ENCODE measurements at regions of chr3 and their contacts with region 1.

Region 1: GRCh38 chr3:195106418-195106906 is 164.5 kb downstream of the XXYLT1 start:
- DNase-seq: peak; percentile 85
- ATAC-seq: peak; percentile 98
- H3K4me3 ChIP-seq: peak overlapping the region in 3 of 5 experiments; percentile 13 to 40 (median 21)
- H3K4me3 Mint-ChIP-seq: peak overlapping the region; percentile 80
- H3K27ac ChIP-seq: no peak overlapping the region
- H3K27ac Mint-ChIP-seq: peak overlapping the region; percentile 79
- H3K4me1 ChIP-seq: peaks cover 15 to 24% of the 10 kb centered on the region in 2 donors
- H3K4me1 Mint-ChIP-seq: peaks cover 34% of the 10 kb centered on the region
- H3K27me3 ChIP-seq: no peaks in the 10 kb centered on the region
- H3K27me3 Mint-ChIP-seq: no peaks in the 10 kb centered on the region
- CTCF ChIP-seq: peak; percentile 97

Region 2: GRCh38 chr3:194769020-194769643 is 337.3 kb before region 1 on chr3:
- CTCF ChIA-PET with region 1: interaction called, 4 read pairs
- POLR2A ChIA-PET with region 1: no interaction called
- intact Hi-C with region 1: loop called (anchors 1 kb)
- DNase-seq: peak; percentile 97
- ATAC-seq: peak; percentile 97
- H3K4me3 ChIP-seq: peak overlapping the region; percentile 40 to 75 (median 55)
- H3K4me3 Mint-ChIP-seq: peak overlapping the region; percentile 85
- H3K27ac ChIP-seq: peak overlapping the region; percentile 52 to 77
- H3K27ac Mint-ChIP-seq: peak overlapping the region; percentile 83
- H3K4me1 ChIP-seq: peaks cover 19 to 29% of the 10 kb centered on the region in 2 donors
- H3K4me1 Mint-ChIP-seq: peaks cover 29% of the 10 kb centered on the region
- H3K27me3 ChIP-seq: peaks cover 0 to 2% (median 0%) of the 10 kb centered on the region in 4 experiments
- H3K27me3 Mint-ChIP-seq: peaks cover 14% of the 10 kb centered on the region
- CTCF ChIP-seq: no peak

Region 3: DNA sequence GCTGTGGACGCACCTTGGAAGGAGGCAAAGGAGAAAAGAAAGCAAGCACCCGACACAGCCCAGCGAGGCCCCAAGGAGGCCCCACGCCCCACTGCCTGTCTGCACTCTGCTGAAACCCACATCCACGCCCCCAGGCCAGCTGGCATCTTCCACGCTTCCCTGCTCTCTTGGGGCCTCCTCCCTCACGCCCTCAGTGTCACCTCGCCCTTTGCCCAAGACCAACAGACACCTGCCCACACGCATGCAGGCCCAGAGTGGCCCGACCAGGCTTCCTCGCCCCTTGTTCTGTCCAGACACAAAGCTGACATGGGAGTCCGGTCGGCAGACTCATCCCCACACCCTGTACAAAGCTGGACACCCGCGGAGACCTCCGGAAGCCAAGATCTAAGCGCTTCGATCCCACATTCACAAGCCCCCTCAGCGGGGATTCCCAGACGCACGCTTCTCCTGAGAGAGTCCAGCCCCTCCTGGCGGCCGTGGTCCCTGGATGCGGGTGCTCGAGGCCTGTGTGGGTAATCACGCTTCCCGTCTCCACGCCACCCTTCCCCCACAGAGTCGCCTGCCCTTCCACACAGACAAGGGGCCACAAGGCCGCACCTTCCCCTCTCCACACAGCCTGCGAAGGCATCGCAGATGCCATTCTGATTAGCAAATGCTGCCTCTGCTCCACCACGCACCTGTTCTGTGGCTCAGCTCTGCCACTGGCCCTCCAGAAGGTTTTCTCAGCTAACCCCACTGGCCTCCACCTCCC is 12.1 kb before region 1 on chr3:
- CTCF ChIA-PET with region 1: interaction called, 25 read pairs
- POLR2A ChIA-PET with region 1: no interaction called
- intact Hi-C with region 1: no loop called
- DNase-seq: peak; percentile 87
- ATAC-seq: peak; percentile 85
- H3K4me3 ChIP-seq: peak overlapping the region in 4 of 5 experiments; percentile 36 to 63 (median 52)
- H3K4me3 Mint-ChIP-seq: peak overlapping the region; percentile 81
- H3K27ac ChIP-seq: peak overlapping the region; percentile 89 to 95
- H3K27ac Mint-ChIP-seq: peak overlapping the region; percentile 93
- H3K4me1 ChIP-seq: peaks cover 44 to 49% of the 10 kb centered on the region in 2 donors
- H3K4me1 Mint-ChIP-seq: peaks cover 54% of the 10 kb centered on the region
- H3K27me3 ChIP-seq: no peaks in the 10 kb centered on the region
- H3K27me3 Mint-ChIP-seq: no peaks in the 10 kb centered on the region
- CTCF ChIP-seq: no peak

Region 4: DNA sequence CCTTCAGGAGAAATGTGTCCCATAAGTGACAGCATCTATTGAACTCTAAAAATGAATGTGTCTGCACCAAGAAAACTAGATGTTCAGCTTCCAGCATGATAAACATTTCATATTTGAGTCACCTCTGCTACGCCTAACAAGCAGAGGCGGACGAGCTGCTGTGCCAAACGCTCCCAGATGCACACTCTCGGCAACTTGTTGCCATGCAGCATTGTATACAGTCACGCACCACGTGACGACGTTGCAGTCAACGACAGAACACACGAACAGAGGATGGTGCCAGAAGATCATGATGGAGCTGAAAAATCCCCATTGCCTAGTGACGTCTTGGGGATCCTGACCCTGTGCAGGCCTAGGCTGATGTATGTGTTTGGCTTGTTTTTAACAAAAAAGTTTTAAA is 27.0 kb after region 1 on chr3:
- CTCF ChIA-PET with region 1: interaction called, 14 read pairs
- POLR2A ChIA-PET with region 1: no interaction called
- intact Hi-C with region 1: no loop called
- DNase-seq: peak; percentile 66
- ATAC-seq: no peak
- H3K4me3 ChIP-seq: no peak overlapping the region
- H3K4me3 Mint-ChIP-seq: peak overlapping the region; percentile 37
- H3K27ac ChIP-seq: no peak overlapping the region
- H3K27ac Mint-ChIP-seq: peak overlapping the region; percentile 60
- H3K4me1 ChIP-seq: peaks cover 16 to 22% of the 10 kb centered on the region in 2 donors
- H3K4me1 Mint-ChIP-seq: peaks cover 37% of the 10 kb centered on the region
- H3K27me3 ChIP-seq: no peaks in the 10 kb centered on the region
- H3K27me3 Mint-ChIP-seq: no peaks in the 10 kb centered on the region
- CTCF ChIP-seq: no peak

Region 5: GRCh38 chr3:195259475-195260279 is 153.2 kb after region 1 on chr3:
- CTCF ChIA-PET with region 1: interaction called, 18 read pairs
- POLR2A ChIA-PET with region 1: no interaction called
- intact Hi-C with region 1: loop called (anchors 1 kb)
- DNase-seq: peak; percentile 95
- ATAC-seq: peak; percentile 90
- H3K4me3 ChIP-seq: peak overlapping the region in 4 of 5 experiments; percentile 63 to 89 (median 72)
- H3K4me3 Mint-ChIP-seq: peak overlapping the region; percentile 74
- H3K27ac ChIP-seq: peak overlapping the region; percentile 78 to 87
- H3K27ac Mint-ChIP-seq: peak overlapping the region; percentile 92
- H3K4me1 ChIP-seq: peaks cover 16 to 23% of the 10 kb centered on the region in 2 donors
- H3K4me1 Mint-ChIP-seq: peaks cover 19% of the 10 kb centered on the region
- H3K27me3 ChIP-seq: no peaks in the 10 kb centered on the region
- H3K27me3 Mint-ChIP-seq: no peaks in the 10 kb centered on the region
- CTCF ChIP-seq: peak; percentile 73

Region 6: GRCh38 chr3:195403852-195404408 is 297.5 kb after region 1 on chr3:
- CTCF ChIA-PET with region 1: no interaction called
- POLR2A ChIA-PET with region 1: no interaction called
- intact Hi-C with region 1: no loop called
- DNase-seq: peak; percentile 27
- ATAC-seq: no peak
- H3K4me3 ChIP-seq: no peak overlapping the region
- H3K4me3 Mint-ChIP-seq: no peak overlapping the region
- H3K27ac ChIP-seq: peak overlapping the region in 1 of 2 donors; percentile 70
- H3K27ac Mint-ChIP-seq: no peak overlapping the region
- H3K4me1 ChIP-seq: peaks cover 34 to 46% of the 10 kb centered on the region in 2 donors
- H3K4me1 Mint-ChIP-seq: peaks cover 55% of the 10 kb centered on the region
- H3K27me3 ChIP-seq: no peaks in the 10 kb centered on the region
- H3K27me3 Mint-ChIP-seq: no peaks in the 10 kb centered on the region
- CTCF ChIP-seq: no peak